ENCODE measurements at regions of chr1 and their contacts with region 1.

Region 1: GRCh38 chr1:30929135-30929889 is 20.8 kb upstream of the SDC3 start:
- DNase-seq: peak in 4 of 5 donors; percentile 18 to 36 (median 26)
- H3K4me3 ChIP-seq: no peak overlapping the region
- H3K4me3 Mint-ChIP-seq: peak overlapping the region in 1 of 7 donors; percentile 17
- H3K27ac ChIP-seq: no peak overlapping the region
- H3K27ac Mint-ChIP-seq: peak overlapping the region in 7 of 8 donors; percentile 29 to 87 (median 54)
- H3K4me1 ChIP-seq: peaks cover 5% of the 10 kb centered on the region
- H3K4me1 Mint-ChIP-seq: peaks cover 10 to 12% (median 12%) of the 10 kb centered on the region in 3 donors
- H3K27me3 ChIP-seq: no peaks in the 10 kb centered on the region
- H3K27me3 Mint-ChIP-seq: no peaks in the 10 kb centered on the region

Region 2: GRCh38 chr1:30877205-30877912 is 52.0 kb before region 1 on chr1:
- CTCF ChIA-PET with region 1: no interaction called
- POLR2A ChIA-PET with region 1: no interaction called
- DNase-seq: no peak
- H3K4me3 ChIP-seq: no peak overlapping the region
- H3K4me3 Mint-ChIP-seq: no peak overlapping the region
- H3K27ac ChIP-seq: no peak overlapping the region
- H3K27ac Mint-ChIP-seq: peak overlapping the region in 1 of 8 donors; percentile 80
- H3K4me1 ChIP-seq: no peaks in the 10 kb centered on the region
- H3K4me1 Mint-ChIP-seq: peaks cover 0 to 2% (median 0%) of the 10 kb centered on the region in 3 donors
- H3K27me3 ChIP-seq: no peaks in the 10 kb centered on the region
- H3K27me3 Mint-ChIP-seq: peaks cover 20 to 62% of the 10 kb centered on the region in 2 donors

Region 3: DNA sequence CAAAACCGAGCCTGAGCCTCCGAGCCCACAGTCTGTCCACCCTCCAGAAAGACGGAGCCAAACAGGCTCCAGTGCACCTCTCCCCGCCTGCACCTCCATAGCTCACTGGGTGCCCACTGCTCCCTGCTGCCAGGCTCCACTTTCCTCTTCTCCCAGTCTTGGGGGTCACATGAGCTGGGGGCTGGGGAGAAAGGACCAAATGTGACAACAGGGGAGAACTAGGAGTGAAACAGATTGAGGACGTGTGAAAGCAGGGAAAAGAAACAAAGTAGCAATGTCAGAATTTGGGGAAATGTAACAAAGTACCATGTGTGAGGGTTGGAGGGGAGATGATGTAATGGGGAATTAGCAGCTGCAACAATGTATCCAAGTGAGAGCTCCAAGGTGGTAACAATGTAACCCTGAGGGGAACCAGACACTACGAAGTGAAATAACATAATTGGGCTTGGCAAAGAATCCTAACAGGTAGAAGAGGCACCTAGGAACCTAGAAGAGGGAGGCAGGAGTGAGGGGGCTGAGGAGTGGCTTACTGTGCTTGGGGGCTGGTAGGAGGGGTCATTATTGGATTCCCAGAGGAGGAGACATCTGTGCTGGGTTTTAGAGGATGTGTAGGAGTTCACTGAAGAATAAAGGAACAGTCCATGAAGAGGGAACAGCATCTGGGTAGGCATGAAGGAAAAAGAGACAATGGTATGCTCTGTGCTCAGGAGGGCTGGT is 33.2 kb before region 1 on chr1:
- CTCF ChIA-PET with region 1: no interaction called
- POLR2A ChIA-PET with region 1: no interaction called
- DNase-seq: no peak
- H3K4me3 ChIP-seq: no peak overlapping the region
- H3K4me3 Mint-ChIP-seq: no peak overlapping the region
- H3K27ac ChIP-seq: peak overlapping the region; percentile 31
- H3K27ac Mint-ChIP-seq: peak overlapping the region in 1 of 8 donors; percentile 35
- H3K4me1 ChIP-seq: no peaks in the 10 kb centered on the region
- H3K4me1 Mint-ChIP-seq: no peaks in the 10 kb centered on the region
- H3K27me3 ChIP-seq: no peaks in the 10 kb centered on the region
- H3K27me3 Mint-ChIP-seq: peaks cover 9 to 32% of the 10 kb centered on the region in 2 donors

Region 4: DNA sequence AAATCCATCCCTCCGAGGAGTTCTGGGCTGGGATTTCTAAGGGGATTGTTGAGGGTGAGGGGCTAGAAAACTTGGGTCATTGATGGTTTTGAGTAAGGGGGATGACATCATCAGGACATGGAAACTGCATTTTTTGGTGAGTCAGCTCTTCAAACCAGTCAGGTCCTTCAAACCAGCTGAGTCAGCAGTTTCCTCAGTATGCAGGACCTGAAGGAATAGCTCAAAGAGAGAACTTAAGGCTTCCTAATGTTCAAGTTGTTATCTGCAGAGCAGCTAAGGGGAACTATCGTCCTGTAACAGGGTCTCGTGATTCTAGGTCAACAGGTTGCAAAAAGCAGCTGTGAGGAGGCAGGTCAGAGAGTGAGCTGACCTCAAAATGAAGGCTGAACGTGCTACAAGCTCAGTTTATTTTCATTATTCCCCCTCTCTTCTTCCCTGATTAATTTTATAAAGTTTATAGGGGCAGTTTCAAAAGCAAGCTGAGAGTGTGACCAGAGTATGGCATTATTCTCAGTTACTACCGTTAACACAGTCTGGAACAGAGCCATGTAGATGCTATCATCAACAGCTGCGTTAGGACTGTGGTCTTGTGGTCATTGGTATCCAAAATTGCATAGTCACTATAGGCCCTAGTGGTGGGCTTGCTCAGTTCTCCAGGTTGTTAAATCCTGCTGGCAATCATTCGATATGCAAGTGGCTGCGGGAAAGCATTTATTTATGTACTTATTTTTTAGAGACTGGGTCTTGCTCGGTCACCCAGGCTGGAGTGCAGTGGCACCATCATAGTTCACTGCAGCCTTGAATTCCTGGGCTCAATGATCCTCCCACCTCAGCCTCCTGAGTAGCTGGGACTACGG is 10.1 kb before region 1 on chr1:
- CTCF ChIA-PET with region 1: interaction called, 12 read pairs
- POLR2A ChIA-PET with region 1: no interaction called
- DNase-seq: no peak
- H3K4me3 ChIP-seq: no peak overlapping the region
- H3K4me3 Mint-ChIP-seq: no peak overlapping the region
- H3K27ac ChIP-seq: peak overlapping the region; percentile 22
- H3K27ac Mint-ChIP-seq: no peak overlapping the region
- H3K4me1 ChIP-seq: no peaks in the 10 kb centered on the region
- H3K4me1 Mint-ChIP-seq: peaks cover 0 to 3% (median 0%) of the 10 kb centered on the region in 3 donors
- H3K27me3 ChIP-seq: no peaks in the 10 kb centered on the region
- H3K27me3 Mint-ChIP-seq: peaks cover 0 to 5% of the 10 kb centered on the region in 2 donors

Measured in CD8-positive, alpha-beta memory T cell (primary cell).